K562 (cell line): ENCODE measurements at regions of chr7 and their contacts with region 1.

Region 1: GRCh38 chr7:8217200-8218068 is 44.5 kb downstream of the ICA1 start:
- DNase-seq: peak; percentile 38 to 74 (median 39)
- ATAC-seq: peak; percentile 70
- H3K4me3 ChIP-seq: no peak overlapping the region
- H3K27ac ChIP-seq: no peak overlapping the region
- H3K4me1 ChIP-seq: no peaks in the 10 kb centered on the region
- H3K27me3 ChIP-seq: no peaks in the 10 kb centered on the region
- CTCF ChIP-seq: peak; percentile 35 to 74 (median 53); a peak in 4 of 6 replicates
- EP300 ChIP-seq: no peak
- POLR2A ChIP-seq: no peak
- RAD21 ChIP-seq: peak; percentile 85 to 86

Region 2: DNA sequence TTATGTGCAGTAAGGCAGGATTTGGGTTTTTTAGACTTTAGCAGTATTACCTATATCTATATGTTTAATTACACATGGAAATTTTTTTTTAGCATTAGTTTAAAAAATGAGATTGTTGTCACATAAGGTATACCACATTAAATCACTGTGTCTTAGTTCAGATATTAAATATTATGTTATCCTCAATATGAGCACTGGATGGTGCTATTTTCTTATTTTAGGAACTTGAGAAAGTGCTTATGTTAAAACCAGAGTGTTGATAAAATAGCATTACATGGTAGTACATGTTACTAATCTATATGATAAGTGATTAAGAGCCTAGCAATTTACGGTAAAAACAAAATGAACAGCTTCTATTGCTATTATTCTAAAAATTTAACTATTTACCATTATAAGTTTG is 622.0 kb before region 1 on chr7:
- CTCF ChIA-PET with region 1: interaction called, 7 read pairs
- POLR2A ChIA-PET with region 1: no interaction called
- in situ Hi-C with region 1: no loop called
- intact Hi-C with region 1: loop called (anchors 5 kb)
- DNase-seq: peak; percentile 14 to 40 (median 24)
- ATAC-seq: peak; percentile 61; the same call in 2 of the 3 replicates
- H3K4me3 ChIP-seq: no peak overlapping the region
- H3K27ac ChIP-seq: no peak overlapping the region
- H3K4me1 ChIP-seq: no peaks in the 10 kb centered on the region
- H3K27me3 ChIP-seq: no peaks in the 10 kb centered on the region
- CTCF ChIP-seq: peak in 1 of 3 experiments; percentile 52; a peak in 2 of 6 replicates
- EP300 ChIP-seq: no peak
- POLR2A ChIP-seq: no peak
- RAD21 ChIP-seq: peak; percentile 53 to 75

Region 3: GRCh38 chr7:7662527-7662926 is 554.9 kb before region 1 on chr7:
- CTCF ChIA-PET with region 1: no interaction called
- POLR2A ChIA-PET with region 1: no interaction called
- in situ Hi-C with region 1: no loop called
- intact Hi-C with region 1: loop called (anchors 5 kb)
- DNase-seq: peak in 1 of 4 experiments; percentile 29
- ATAC-seq: peak; percentile 38; the same call in 2 of the 3 replicates
- H3K4me3 ChIP-seq: no peak overlapping the region
- H3K27ac ChIP-seq: no peak overlapping the region
- H3K4me1 ChIP-seq: peaks cover 0 to 5% of the 10 kb centered on the region in 2 experiments; a peak in 3 of 5 replicates
- H3K27me3 ChIP-seq: no peaks in the 10 kb centered on the region
- CTCF ChIP-seq: peak; percentile 39 to 62 (median 41); a peak in 5 of 6 replicates
- EP300 ChIP-seq: no peak
- POLR2A ChIP-seq: no peak
- RAD21 ChIP-seq: peak in 1 of 2 experiments; percentile 56; a peak in 2 of 4 replicates

Region 4: GRCh38 chr7:8162181-8162580 is 55.3 kb before region 1 on chr7:
- CTCF ChIA-PET with region 1: no interaction called
- POLR2A ChIA-PET with region 1: no interaction called
- in situ Hi-C with region 1: no loop called
- intact Hi-C with region 1: no loop called
- DNase-seq: no peak
- ATAC-seq: no peak
- H3K4me3 ChIP-seq: no peak overlapping the region
- H3K27ac ChIP-seq: no peak overlapping the region
- H3K4me1 ChIP-seq: peaks cover 0 to 7% of the 10 kb centered on the region in 2 experiments; a peak in 4 of 5 replicates
- H3K27me3 ChIP-seq: no peaks in the 10 kb centered on the region
- CTCF ChIP-seq: no peak
- EP300 ChIP-seq: no peak
- POLR2A ChIP-seq: no peak
- RAD21 ChIP-seq: no peak

Region 5: GRCh38 chr7:10104292-10104691 is 1886.9 kb after region 1 on chr7:
- CTCF ChIA-PET with region 1: no interaction called
- POLR2A ChIA-PET with region 1: no interaction called
- in situ Hi-C with region 1: no loop called
- intact Hi-C with region 1: no loop called
- DNase-seq: no peak
- ATAC-seq: no peak
- H3K4me3 ChIP-seq: no peak overlapping the region
- H3K27ac ChIP-seq: no peak overlapping the region
- H3K4me1 ChIP-seq: no peaks in the 10 kb centered on the region
- H3K27me3 ChIP-seq: no peaks in the 10 kb centered on the region
- CTCF ChIP-seq: no peak
- EP300 ChIP-seq: no peak
- POLR2A ChIP-seq: no peak
- RAD21 ChIP-seq: no peak